Left cardiac atrium (tissue), 4 donors: ENCODE measurements at regions of chr20 and their contacts with region 1.

Region 1: DNA sequence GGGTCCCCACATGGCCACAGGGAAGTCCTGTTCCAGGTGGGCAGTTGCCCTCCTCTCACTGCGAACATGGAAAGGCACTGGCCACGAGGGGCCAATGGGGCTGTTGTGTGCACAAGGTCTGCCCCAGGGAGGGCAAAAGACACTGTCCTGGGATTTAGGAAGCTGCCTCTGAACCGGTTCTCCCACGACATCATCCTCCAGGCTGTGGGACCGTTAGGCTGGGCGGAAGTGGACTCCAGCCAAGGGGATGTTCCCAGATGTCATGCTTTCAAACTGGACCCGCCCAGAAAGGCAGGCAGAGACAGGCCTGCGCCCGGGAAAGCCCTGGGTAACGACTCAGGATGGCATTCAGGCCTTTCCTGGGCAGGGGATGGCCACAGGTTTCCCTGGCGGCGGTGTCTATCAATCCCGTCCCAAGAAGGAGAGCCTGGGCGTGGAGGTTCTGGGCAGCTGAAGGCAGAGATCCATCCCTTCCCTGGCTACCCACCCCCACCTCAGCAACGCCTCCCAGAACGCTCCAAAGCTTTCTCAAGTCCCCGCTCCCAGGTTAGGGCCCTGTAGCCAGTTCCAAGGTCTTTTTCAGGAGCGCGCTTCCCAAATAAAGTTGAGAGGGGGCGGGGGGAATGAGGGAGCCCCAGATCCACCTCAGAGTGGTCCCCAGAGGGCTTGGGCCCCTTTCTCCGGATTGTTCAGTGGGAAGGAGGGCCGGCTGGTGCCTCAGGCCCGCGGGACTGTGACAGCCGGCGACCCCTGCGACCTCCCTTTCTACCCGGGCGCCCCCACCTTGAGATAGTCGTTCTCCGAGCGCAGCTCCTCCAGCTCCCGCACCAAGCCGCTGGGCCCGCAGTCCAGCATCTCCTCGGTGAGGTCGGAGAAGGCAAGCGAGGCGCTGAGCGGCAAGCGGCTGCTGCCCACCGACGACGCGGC is 13.8 kb upstream of the TLDC2 start:
- DNase-seq: peak; percentile 91
- ATAC-seq: peak; percentile 64 to 70

Region 2: DNA sequence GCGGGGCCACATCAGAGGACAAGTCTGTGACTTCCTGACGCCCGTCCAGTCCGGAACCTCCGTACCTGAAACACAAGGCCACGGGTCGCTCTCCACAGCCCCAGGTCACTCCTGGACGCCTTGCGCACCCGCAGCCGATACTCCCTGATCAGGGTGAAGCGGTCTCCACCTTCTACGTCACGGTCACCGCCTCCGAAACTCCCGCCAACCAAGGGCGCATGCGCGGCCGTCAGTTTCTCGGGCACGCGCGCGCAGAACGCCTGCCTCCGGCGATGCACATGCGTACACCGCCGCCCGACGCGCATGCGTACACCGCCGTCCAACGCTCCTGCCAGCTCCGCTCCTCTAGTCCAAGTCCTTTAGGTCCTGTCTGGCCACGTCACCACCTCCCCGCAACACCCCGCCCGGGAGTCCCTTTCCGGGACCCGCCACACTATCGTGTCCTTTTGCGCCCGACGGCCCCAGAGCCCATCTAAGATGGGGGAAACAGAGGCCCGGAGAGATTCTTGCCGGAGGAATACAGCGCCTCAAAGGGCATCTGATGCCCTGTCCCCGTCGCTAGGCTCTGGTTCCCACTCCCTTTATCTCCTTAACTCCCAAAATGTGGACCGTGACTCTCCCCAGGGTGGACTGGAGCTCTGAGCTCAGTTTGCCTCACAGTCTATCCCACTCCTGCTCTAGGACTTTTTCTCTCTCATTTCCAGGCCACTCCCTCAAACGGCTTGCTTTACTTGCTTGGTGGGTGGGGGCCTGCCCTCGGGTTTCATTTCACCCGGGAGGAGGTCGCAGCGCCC is 88.3 kb before region 1 on chr20 and contains the start of gene DSN1:
- intact Hi-C with region 1: loop called (anchors 10 kb)
- DNase-seq: peak; percentile 97
- ATAC-seq: peak; percentile 96 to 98
- total RNA-seq, gene DSN1: 5.0 to 6.7 TPM